A549 (cell line): ENCODE measurements at regions of chrX and their contacts with region 1.

Region 1: DNA sequence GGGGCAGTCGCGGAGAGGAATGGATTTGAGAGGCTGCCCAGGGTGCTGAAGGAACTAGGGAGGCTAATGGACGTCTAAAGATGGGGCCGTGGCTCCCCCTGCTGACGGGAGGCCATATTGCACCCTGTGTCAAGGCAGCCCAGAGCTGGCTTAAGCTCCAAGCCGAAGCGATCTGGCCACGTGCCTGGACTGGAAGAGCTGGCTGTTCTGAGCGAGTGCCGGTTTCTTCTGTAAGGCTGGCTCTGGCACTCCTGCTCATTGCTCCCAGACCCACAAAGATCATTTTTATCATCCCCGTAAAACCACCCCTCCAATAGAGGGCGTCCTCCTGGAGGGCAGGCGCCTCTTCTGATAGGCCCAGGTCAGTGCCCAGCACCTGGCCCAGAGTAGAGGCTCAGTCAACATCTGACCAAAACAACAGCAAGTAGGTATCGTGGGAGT is 5.6 kb downstream of the PNCK start:
- DNase-seq: peak; percentile 81 to 85
- ATAC-seq: peak; percentile 60 to 92
- H3K4me3 ChIP-seq: peak overlapping the region; percentile 35
- H3K27ac ChIP-seq: peak overlapping the region; percentile 30 to 63; a peak in 3 of 6 replicates
- H3K4me1 ChIP-seq: no peaks in the 10 kb centered on the region
- CTCF ChIP-seq: peak; percentile 63
- EP300 ChIP-seq: no peak
- POLR2A ChIP-seq: no peak
- RAD21 ChIP-seq: peak; percentile 58 to 74

Region 2: DNA sequence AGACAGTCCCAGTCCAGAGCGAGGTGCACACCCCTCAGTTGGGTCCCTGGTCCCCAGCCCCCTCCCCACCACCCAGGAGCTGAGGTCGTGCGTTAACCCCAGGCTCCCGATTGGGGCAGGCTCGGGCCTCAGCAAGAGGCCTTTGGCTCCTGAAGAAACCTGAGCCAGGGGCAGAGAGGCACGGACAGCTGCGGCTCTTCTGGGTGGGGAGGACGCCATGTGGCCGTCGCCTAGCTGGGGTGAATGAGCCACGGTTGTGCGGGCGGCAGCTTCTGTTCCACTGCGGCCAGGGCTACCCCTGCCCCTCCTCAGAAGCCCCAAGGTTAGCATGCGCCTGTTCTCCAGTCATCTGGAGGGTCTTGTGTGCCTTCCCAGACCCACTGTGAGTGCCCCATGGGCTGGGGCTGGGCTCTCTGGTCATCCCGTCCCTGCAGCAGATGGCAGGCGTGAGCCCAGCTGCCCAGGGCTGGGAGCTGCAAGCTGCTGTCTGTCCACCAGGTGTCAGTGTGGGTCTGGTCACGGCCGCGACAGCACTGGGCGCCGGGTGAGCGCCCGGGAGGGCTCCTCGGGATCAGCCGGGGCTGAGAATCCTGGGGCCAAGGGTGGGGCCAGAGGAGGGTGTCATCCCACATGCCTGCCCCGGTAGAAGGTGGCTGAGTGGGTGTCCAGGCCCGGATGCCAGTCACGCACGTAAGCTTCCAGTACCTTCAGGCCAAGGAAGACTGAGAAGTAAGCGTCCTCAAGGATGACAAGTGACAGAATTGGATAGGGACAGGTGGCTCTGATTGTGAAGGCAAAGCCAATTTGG is 128.6 kb before region 1 on chrX:
- CTCF ChIA-PET with region 1: interaction called, 23 read pairs
- POLR2A ChIA-PET with region 1: no interaction called
- DNase-seq: peak; percentile 50 to 70
- ATAC-seq: peak; percentile 77 to 97
- H3K4me3 ChIP-seq: no peak overlapping the region
- H3K27ac ChIP-seq: no peak overlapping the region
- H3K4me1 ChIP-seq: no peaks in the 10 kb centered on the region
- CTCF ChIP-seq: peak; percentile 84
- EP300 ChIP-seq: no peak
- POLR2A ChIP-seq: no peak
- RAD21 ChIP-seq: peak; percentile 71 to 75

Region 3: GRCh38 chrX:153554519-153555167 is 113.3 kb before region 1 on chrX:
- CTCF ChIA-PET with region 1: interaction called, 46 read pairs
- POLR2A ChIA-PET with region 1: no interaction called
- DNase-seq: peak; percentile 60 to 62
- ATAC-seq: peak; percentile 80 to 94
- H3K4me3 ChIP-seq: no peak overlapping the region
- H3K27ac ChIP-seq: no peak overlapping the region
- H3K4me1 ChIP-seq: no peaks in the 10 kb centered on the region
- CTCF ChIP-seq: peak; percentile 62
- EP300 ChIP-seq: no peak
- POLR2A ChIP-seq: no peak
- RAD21 ChIP-seq: peak; percentile 68 to 74

Region 4: GRCh38 chrX:153635788-153636622 is 32.0 kb before region 1 on chrX:
- CTCF ChIA-PET with region 1: interaction called, 17 read pairs
- POLR2A ChIA-PET with region 1: no interaction called
- DNase-seq: peak; percentile 69 to 79
- ATAC-seq: peak; percentile 82 to 98
- H3K4me3 ChIP-seq: no peak overlapping the region
- H3K27ac ChIP-seq: no peak overlapping the region
- H3K4me1 ChIP-seq: no peaks in the 10 kb centered on the region
- CTCF ChIP-seq: peak; percentile 41; the same call in 2 of the 3 replicates
- EP300 ChIP-seq: no peak
- POLR2A ChIP-seq: no peak
- RAD21 ChIP-seq: peak in 1 of 2 experiments; percentile 34; a peak in 2 of 5 replicates

Region 5: GRCh38 chrX:153649178-153649914 is 18.6 kb before region 1 on chrX:
- CTCF ChIA-PET with region 1: interaction called, 78 read pairs
- POLR2A ChIA-PET with region 1: no interaction called
- DNase-seq: peak; percentile 57 to 69
- ATAC-seq: peak; percentile 55 to 77; a peak in 5 of 6 replicates
- H3K4me3 ChIP-seq: no peak overlapping the region
- H3K27ac ChIP-seq: no peak overlapping the region
- H3K4me1 ChIP-seq: peaks cover 13% of the 10 kb centered on the region; the same call in 1 of the 3 replicates
- CTCF ChIP-seq: peak; percentile 31
- EP300 ChIP-seq: no peak
- POLR2A ChIP-seq: no peak
- RAD21 ChIP-seq: peak; percentile 58 to 65; a peak in 4 of 5 replicates

Region 6: GRCh38 chrX:153684467-153685155 is 16.6 kb after region 1 on chrX:
- CTCF ChIA-PET with region 1: interaction called, 32 read pairs
- POLR2A ChIA-PET with region 1: no interaction called
- DNase-seq: no peak
- ATAC-seq: no peak
- H3K4me3 ChIP-seq: no peak overlapping the region
- H3K27ac ChIP-seq: no peak overlapping the region
- H3K4me1 ChIP-seq: peaks cover 13% of the 10 kb centered on the region
- CTCF ChIP-seq: no peak
- EP300 ChIP-seq: no peak
- POLR2A ChIP-seq: no peak
- RAD21 ChIP-seq: no peak

Region 7: DNA sequence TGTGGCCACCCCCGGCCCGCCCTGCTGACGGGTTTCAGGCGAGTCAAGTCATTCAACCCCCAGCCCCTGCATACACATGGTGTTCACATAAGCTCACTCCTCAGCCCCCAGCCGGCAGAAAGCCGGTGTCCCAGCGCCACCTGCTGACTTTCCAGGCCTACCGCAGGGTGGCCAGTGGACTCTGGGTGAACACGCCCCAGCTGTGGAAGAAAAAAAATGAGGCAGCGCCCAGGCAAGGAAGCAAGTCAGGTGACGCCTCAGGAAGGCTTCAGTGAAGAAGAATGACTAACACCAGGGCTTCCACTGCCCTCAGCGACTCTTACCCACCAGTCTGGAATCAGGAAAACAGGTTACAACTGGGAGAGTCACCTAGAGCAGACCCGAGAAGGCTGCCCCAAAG is 40.4 kb after region 1 on chrX:
- CTCF ChIA-PET with region 1: interaction called, 13 read pairs
- POLR2A ChIA-PET with region 1: no interaction called
- DNase-seq: peak; percentile 73 to 81
- ATAC-seq: peak; percentile 90 to 93
- H3K4me3 ChIP-seq: no peak overlapping the region
- H3K27ac ChIP-seq: peak overlapping the region in 1 of 2 experiments; percentile 35; a peak in 2 of 6 replicates
- H3K4me1 ChIP-seq: peaks cover 11% of the 10 kb centered on the region; the same call in 2 of the 3 replicates
- CTCF ChIP-seq: peak; percentile 63
- EP300 ChIP-seq: no peak
- POLR2A ChIP-seq: no peak
- RAD21 ChIP-seq: peak; percentile 55 to 64